ENCODE measurements at regions of chr7 and their contacts with region 1.

Region 1: DNA sequence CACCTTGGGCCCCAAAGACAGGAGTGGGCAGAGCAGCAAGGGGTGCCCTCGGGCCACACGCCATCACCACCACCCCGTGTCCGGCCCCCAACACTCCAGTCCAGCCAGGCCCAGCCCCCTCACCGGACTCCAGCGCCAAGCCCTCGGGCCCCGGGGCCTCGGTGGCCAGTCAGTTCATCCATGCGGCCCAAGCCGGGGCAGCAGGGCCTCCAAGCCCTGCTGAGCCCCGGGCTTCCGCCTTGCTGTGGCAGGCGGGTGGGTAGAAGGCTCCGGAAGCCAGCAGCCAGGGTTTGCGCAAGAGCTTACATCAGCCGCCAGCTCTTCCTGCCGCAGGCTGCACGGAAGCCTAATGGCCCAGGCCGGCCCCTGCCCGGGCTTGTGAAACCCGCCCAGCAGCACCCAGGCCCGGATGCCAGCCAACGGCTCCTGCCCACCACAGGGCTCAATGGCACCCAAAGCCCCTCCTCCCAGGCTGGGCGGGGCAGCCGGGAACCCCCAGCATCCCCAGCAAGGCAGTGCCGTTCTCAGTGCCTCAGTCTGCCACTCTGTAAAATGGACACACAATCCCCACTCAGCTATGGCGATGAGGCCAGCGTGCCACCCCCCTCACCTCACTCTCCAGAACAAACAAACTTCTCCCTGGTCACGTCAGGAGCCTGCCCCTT is 26.5 kb downstream of the TNRC18 start:
- DNase-seq: peak; percentile 84
- H3K4me3 Mint-ChIP-seq: peak overlapping the region; percentile 80
- H3K27ac Mint-ChIP-seq: peak overlapping the region; percentile 94
- H3K4me1 Mint-ChIP-seq: peaks cover 15% of the 10 kb centered on the region
- H3K27me3 Mint-ChIP-seq: no peaks in the 10 kb centered on the region

Region 2: GRCh38 chr7:5183145-5183544 is 214.0 kb before region 1 on chr7:
- intact Hi-C with region 1: no loop called
- DNase-seq: no peak
- H3K4me3 Mint-ChIP-seq: no peak overlapping the region
- H3K27ac Mint-ChIP-seq: no peak overlapping the region
- H3K4me1 Mint-ChIP-seq: no peaks in the 10 kb centered on the region
- H3K27me3 Mint-ChIP-seq: peaks cover 2% of the 10 kb centered on the region

Region 3: GRCh38 chr7:5367661-5368060 is 29.5 kb before region 1 on chr7:
- intact Hi-C with region 1: loop called (anchors 2 kb)
- DNase-seq: no peak
- H3K4me3 Mint-ChIP-seq: no peak overlapping the region
- H3K27ac Mint-ChIP-seq: no peak overlapping the region
- H3K4me1 Mint-ChIP-seq: peaks cover 16% of the 10 kb centered on the region
- H3K27me3 Mint-ChIP-seq: no peaks in the 10 kb centered on the region

Region 4: GRCh38 chr7:5423844-5424688 is 26.9 kb after region 1 on chr7:
- intact Hi-C with region 1: loop called (anchors 2 kb)
- DNase-seq: peak; percentile 40
- H3K4me3 Mint-ChIP-seq: peak overlapping the region; percentile 79
- H3K27ac Mint-ChIP-seq: peak overlapping the region; percentile 58
- H3K4me1 Mint-ChIP-seq: peaks cover 11% of the 10 kb centered on the region
- H3K27me3 Mint-ChIP-seq: peaks cover 47% of the 10 kb centered on the region

Measured in activated T-helper 2 cell treated with anti-CD3 and anti-CD28 coated beads, Interferon-gamma antibody, Interleukin-2, Interleukin-4, amounts not matched to agents 10 μg/mL and 5 μg/mL and 100 μg/mL, durations not matched to agents 14 hours and 24 hours and 36 hours (primary cell).